Ovary (tissue), 10 donors: ENCODE measurements at regions of chr10 and their contacts with region 1.

Region 1: DNA sequence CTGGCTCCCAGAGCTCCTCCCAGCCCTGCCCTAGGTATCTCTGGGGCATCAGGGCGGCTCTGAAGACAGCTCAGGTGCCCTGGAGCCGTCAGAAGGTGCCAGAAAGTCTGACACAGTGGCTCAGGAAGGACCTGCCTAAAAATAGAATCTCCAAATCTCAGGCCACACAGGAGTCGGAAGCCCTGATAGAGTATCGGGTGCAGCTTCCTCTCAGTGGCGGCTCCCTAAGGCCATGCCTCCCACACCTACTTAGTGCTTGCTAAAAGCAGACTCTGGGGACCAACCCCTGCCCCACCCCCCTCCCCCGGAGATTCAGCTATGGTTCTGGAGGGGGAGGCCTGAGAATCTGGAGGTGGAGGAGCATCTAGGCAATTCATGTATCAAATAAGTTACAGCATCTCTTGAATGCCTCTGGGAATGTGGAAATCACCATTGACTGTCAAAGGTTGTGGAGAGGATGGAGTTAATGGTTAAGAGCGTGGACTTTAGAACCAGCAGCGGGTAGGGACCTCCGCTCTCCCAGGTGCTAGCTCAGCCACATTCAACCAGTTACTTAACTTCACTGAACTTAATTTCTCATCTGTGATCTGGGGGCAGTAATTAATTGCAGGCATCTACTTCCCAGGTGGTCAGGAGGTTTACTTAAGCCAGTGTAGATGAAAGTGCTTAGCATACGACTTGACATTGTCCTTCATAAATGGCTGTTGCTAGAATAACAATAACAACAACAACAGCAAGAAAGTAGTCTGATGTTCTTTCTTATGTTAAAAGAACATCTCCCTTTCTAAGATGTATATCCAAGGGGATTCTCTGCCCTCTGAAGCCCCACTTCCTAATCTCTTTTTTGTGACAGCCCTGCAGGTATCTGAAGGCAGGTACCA is 38.6 kb upstream of the MXI1 start:
- DNase-seq: no peak
- H3K4me3 ChIP-seq: no peak overlapping the region
- H3K27ac ChIP-seq: no peak overlapping the region
- H3K4me1 ChIP-seq: no peaks in the 10 kb centered on the region
- H3K27me3 ChIP-seq: no peaks in the 10 kb centered on the region
- CTCF ChIP-seq: no peak
- EP300 ChIP-seq: no peak
- POLR2A ChIP-seq: no peak

Region 2: GRCh38 chr10:110181451-110181850 is 12.6 kb after region 1 on chr10:
- intact Hi-C with region 1: no loop called
- DNase-seq: no peak
- H3K4me3 ChIP-seq: no peak overlapping the region
- H3K27ac ChIP-seq: no peak overlapping the region
- H3K4me1 ChIP-seq: no peaks in the 10 kb centered on the region
- H3K27me3 ChIP-seq: no peaks in the 10 kb centered on the region
- CTCF ChIP-seq: no peak
- EP300 ChIP-seq: no peak
- POLR2A ChIP-seq: no peak

Region 3: DNA sequence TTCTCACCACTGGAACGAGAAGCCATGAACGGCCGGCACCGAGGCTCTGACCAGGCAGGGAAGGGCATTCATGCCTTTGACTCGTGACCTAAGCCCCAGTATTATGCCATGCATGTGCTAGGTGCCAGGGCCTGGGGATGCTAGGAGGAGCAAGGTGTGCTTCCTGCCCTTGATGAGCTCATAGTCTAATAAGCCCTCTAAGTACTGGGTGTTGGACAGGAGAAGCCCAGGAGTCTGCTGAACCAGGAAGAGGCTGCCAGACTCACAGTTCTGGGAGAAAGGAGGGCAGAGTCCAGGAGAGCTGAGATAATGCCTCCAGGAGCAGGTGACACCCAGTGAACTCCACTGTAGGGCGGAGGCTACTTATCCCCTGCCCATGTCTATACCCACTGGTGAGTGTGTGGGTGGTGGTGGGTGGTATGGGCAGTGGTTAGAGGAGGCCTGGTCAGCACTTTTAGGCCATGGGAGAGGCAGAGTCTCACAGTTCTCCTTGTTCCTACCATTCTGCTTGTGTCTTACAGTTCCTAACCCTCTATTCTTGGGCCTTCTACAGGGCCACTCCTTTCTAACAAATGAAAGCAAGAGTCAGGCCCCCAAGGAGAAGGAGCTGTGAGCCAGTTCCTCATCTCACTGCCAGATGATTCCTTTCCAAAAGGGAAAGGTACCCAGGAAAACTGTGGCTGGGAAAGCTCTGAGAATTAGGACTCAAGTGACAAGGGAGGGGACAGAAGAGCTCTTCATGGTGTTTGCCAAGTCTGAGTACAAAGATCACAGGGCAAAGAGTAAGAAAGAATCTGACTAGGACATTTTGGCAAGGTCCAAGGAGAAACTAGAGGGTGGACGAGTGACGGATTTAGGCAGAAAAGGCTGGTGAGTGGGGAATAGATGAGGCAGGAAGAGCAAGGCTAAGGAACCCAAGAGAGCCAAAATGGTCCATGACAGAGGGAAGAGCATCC is 34.9 kb after region 1 on chr10:
- intact Hi-C with region 1: loop called in 1 of 4 experiments (anchors 5 kb)
- DNase-seq: no peak
- H3K4me3 ChIP-seq: no peak overlapping the region
- H3K27ac ChIP-seq: no peak overlapping the region
- H3K4me1 ChIP-seq: no peaks in the 10 kb centered on the region
- H3K27me3 ChIP-seq: no peaks in the 10 kb centered on the region
- CTCF ChIP-seq: no peak
- EP300 ChIP-seq: no peak
- POLR2A ChIP-seq: no peak